PC-3 (cell line): ENCODE measurements at regions of chr1 and their contacts with region 1.

Region 1: DNA sequence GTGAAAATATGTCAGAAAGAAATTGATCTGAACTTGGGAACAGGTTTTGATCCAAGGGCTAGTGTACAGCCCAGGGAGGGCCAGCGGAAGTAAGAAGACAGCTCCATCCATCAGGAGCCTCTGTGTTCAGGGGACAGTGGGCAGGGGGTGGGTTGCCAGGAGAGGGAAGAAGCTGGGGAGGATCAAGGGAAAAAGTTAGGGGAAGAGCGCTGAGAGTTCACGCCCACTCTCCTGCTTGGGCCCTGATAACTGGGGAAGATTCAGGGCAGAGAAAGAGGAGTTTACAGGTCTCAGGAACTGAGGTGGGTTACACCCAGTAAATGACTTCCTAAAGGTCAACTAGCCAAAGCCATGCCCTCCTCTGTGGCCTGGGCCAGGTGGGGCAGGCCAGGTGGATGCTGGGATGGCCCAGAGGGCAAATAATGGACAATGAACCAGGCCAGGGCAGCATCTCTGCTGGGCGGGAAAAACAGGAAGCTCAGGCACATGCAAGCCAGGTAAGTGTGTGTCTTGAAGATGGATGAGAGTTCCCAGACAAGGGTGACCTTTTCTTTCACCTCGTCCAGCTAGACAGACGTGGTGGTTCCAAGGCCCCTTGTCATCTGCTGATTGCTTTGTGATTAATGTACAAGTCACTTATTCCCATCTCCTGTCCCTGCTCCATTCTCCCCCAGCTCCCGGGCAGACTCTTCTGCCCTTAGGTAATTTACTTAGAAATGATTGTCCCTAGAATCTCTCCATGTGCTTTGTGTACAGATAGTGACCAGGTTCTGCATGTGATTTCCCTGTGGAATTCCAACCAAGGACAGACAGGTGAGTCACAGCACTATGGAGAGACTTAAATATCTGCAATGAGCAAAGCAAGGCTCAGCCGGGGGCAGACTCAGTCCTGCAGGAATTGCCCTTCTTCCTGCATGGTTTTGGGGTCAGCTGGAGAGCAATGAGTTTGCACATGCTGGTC is 57.0 kb downstream of the MDM4 start:
- DNase-seq: peak; percentile 98
- ATAC-seq: peak; percentile 72
- H3K4me3 ChIP-seq: peak overlapping the region; percentile 24; the same call in 1 of the 2 replicates
- H3K27ac ChIP-seq: peak overlapping the region; percentile 89
- H3K4me1 ChIP-seq: peaks cover 53% of the 10 kb centered on the region
- H3K27me3 ChIP-seq: no peaks in the 10 kb centered on the region
- CTCF ChIP-seq: no peak

Region 2: DNA sequence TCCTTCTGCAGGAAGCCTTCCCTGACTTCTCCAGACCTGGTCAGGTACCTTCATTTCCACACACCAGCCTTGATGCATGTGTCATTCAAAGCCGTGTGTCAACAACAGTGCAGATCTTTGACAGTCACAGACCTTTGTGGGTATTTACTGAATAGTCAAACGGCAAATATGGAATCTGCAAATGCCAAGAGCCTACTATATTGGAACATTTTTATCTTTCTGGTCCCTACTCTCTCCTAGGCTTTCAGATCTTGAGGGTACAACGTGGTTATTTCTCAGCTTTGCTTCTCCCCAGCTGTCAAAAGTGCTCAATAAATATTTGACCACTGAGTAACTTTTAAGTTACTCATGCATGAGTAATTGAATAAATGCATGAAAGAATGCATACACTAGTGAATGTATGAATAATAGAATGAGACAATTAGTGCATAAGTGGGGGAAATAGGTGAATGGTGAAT is 18.4 kb after region 1 on chr1:
- CTCF ChIA-PET with region 1: no interaction called
- POLR2A ChIA-PET with region 1: no interaction called
- intact Hi-C with region 1: loop called (anchors 1 kb)
- DNase-seq: peak; percentile 99
- ATAC-seq: peak; percentile 85
- H3K4me3 ChIP-seq: no peak overlapping the region; the same call in 1 of the 2 replicates
- H3K27ac ChIP-seq: peak overlapping the region; percentile 78
- H3K4me1 ChIP-seq: peaks cover 35% of the 10 kb centered on the region
- H3K27me3 ChIP-seq: no peaks in the 10 kb centered on the region
- CTCF ChIP-seq: no peak

Region 3: DNA sequence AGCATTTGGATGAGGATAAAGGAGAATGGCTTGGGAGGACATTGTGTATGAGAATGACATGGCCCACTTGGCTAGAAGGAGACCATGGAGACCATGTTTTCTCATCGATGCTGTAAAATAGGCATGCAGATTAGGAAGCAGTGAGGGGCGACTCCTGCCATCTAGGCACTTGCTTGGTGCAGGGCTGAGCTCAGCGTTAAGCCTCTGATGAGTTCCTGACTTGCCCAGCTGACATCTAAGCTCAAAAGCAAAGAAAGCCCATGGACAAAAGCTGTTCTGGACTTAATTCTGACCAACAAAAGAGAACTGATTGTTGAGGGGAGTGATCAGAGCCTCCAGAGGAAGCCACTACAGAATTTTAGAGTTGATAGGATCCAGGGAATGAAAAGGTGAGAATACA is 37.8 kb after region 1 on chr1:
- CTCF ChIA-PET with region 1: no interaction called
- POLR2A ChIA-PET with region 1: interaction called, 11 read pairs
- intact Hi-C with region 1: no loop called
- DNase-seq: no peak
- ATAC-seq: no peak
- H3K4me3 ChIP-seq: no peak overlapping the region
- H3K27ac ChIP-seq: no peak overlapping the region
- H3K4me1 ChIP-seq: no peaks in the 10 kb centered on the region
- H3K27me3 ChIP-seq: no peaks in the 10 kb centered on the region
- CTCF ChIP-seq: no peak

Region 4: DNA sequence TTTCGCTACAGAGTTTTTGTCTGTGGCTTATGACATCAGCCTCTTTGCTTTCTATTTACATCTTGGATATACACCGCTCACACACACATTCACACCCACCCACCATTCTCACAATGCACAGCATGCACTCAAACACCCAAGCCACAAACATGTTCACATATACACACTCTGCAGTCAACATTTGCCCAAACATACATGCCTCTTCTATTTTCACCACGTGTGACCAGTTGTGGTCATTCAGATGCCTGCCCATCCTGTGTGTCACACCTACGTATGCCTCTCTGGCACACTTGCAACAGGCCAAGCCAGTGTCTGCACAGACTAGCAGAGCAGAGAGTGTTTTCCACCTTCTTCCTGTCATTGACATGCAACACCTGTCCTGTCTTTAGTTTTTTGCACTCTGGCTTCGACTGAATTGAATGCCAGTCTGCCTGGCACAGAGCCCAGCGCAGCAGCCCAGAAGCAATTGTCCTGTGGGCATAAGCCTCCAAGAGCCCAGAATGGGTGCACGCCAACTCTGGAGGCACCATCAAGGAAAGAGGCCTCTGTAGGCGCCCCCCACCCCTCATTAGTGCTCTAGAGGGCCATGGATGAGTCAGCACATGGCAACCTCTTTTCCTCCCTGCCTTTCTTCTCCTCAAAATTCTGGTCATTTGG is 150.0 kb after region 1 on chr1:
- CTCF ChIA-PET with region 1: no interaction called
- POLR2A ChIA-PET with region 1: no interaction called
- intact Hi-C with region 1: no loop called
- DNase-seq: peak; percentile 44
- ATAC-seq: no peak
- H3K4me3 ChIP-seq: no peak overlapping the region
- H3K27ac ChIP-seq: no peak overlapping the region
- H3K4me1 ChIP-seq: peaks cover 36% of the 10 kb centered on the region
- H3K27me3 ChIP-seq: no peaks in the 10 kb centered on the region
- CTCF ChIP-seq: no peak

Region 5: DNA sequence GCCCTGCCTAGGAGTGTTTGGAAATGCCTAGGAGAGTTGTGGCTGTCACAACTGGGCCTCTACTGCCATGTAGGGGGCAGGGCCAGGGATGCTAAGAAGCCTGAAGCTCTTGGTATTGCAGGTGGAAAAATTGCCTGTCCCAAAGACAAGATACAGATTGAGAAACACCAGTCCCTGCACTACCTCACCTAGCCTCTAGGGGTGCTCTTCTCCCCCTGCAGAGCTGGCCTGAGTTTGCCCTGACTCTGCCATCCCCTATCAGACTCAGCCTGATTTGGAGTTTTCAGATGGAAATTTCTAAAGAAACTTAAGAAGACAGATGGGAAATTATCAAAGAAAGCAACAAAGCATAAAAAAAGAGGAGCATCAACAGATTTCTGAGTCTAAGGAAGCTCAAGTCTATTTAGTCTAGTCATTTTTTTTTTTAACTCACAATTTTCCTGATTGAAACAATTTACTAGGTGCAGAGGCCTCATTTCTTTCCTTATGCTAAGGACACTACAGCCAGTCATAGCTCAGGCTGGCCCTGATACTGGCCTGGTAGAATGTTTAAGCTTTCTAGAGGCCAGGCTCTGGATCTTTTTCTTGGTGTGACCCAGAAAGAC is 173.7 kb after region 1 on chr1:
- CTCF ChIA-PET with region 1: no interaction called
- POLR2A ChIA-PET with region 1: no interaction called
- intact Hi-C with region 1: loop called (anchors 5 kb)
- DNase-seq: peak; percentile 80
- ATAC-seq: peak; percentile 93
- H3K4me3 ChIP-seq: no peak overlapping the region
- H3K27ac ChIP-seq: no peak overlapping the region
- H3K4me1 ChIP-seq: no peaks in the 10 kb centered on the region
- H3K27me3 ChIP-seq: 0 out of 2 replicates have a peak, but pooled peaks cover 15% of the 10 kb centered on the region
- CTCF ChIP-seq: peak; percentile 98